ENCODE measurements at regions of chr9 and their contacts with region 1.

Region 1: GRCh38 chr9:90914868-90915483 is 113.4 kb downstream of the SYK start:
- DNase-seq: peak; percentile 52 to 81 (median 71)
- H3K4me3 ChIP-seq: no peak overlapping the region
- H3K27ac ChIP-seq: no peak overlapping the region
- H3K27me3 ChIP-seq: peaks cover 0 to 12% (median 0%) of the 10 kb centered on the region in 45 donors
- CTCF ChIP-seq: peak; percentile 69 to 99 (median 93)

Region 2: DNA sequence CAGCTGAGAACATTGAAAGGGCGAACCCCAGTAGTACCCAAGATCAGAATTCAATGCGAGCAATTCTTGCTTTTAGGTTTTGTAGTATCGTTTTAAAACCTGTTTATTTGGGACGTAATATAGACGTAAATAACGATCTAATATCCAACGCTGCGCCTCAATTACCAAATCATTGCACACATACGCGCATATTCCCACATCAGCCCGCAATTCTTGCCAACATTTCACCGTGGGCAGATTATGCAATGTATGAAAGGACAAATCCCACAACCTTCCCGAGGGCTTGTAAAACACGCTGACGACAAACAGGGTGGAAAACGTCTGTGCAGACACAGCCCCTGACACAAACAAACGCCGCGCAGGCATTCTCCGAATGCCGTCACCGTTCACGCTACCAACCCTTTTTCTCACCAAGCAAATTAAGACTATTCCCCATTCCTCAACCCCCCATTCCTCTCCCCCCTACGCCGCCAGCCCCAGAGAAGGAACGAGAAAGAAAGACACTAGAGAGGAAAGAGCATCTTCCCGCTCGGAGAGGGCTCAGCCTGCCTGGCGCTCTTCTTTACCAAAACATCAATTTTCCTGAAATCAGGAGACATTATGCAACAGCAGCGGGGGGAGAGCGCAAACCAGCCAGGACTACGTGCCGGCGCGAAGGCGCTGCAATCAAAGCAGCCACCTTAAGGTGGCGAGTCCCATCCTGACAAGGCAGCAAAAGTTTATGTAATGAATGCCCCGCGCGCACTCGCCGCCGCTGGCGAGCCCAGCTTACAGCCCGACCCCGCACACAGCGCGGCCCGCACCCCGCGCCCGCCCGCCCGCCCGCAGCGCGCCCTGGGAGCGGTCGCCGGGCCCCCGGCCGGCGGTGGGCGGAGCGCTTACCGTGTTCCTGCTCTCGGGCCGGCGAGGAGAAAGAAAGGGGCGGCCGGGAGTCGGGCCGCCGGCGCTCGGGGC is 508.1 kb after region 1 on chr9:
- intact Hi-C with region 1: loop called in 1 of 2 experiments (anchors 5 kb)
- DNase-seq: peak; percentile 37 to 74 (median 61)
- H3K4me3 ChIP-seq: peak overlapping the region; percentile 47 to 86 (median 73)
- H3K27ac ChIP-seq: peak overlapping the region in 58 of 59 donors; percentile 3 to 97 (median 88)
- H3K27me3 ChIP-seq: no peaks in the 10 kb centered on the region
- CTCF ChIP-seq: peak in 27 of 56 donors; percentile 2 to 45 (median 23)

Region 3: GRCh38 chr9:91433180-91433579 is 518.2 kb after region 1 on chr9:
- intact Hi-C with region 1: loop called (anchors 5 to 10 kb)
- DNase-seq: no peak
- H3K4me3 ChIP-seq: no peak overlapping the region
- H3K27ac ChIP-seq: no peak overlapping the region
- H3K27me3 ChIP-seq: no peaks in the 10 kb centered on the region
- CTCF ChIP-seq: peak in 53 of 56 donors; percentile 12 to 73 (median 52)

Region 4: GRCh38 chr9:91465420-91465819 is 550.4 kb after region 1 on chr9:
- intact Hi-C with region 1: no loop called
- DNase-seq: no peak
- H3K4me3 ChIP-seq: no peak overlapping the region
- H3K27ac ChIP-seq: no peak overlapping the region
- H3K27me3 ChIP-seq: no peaks in the 10 kb centered on the region
- CTCF ChIP-seq: no peak

Region 5: GRCh38 chr9:91681461-91682305 is 766.7 kb after region 1 on chr9:
- intact Hi-C with region 1: loop called (anchors 2 to 10 kb)
- DNase-seq: peak; percentile 63 to 88 (median 76)
- H3K4me3 ChIP-seq: peak overlapping the region in 58 of 59 donors; percentile 13 to 63 (median 44)
- H3K27ac ChIP-seq: no peak overlapping the region
- H3K27me3 ChIP-seq: peaks cover 0 to 4% (median 0%) of the 10 kb centered on the region in 45 donors
- CTCF ChIP-seq: peak; percentile 52 to 98 (median 86)

Region 6: GRCh38 chr9:91734371-91734981 is 819.5 kb after region 1 on chr9:
- intact Hi-C with region 1: loop called in 1 of 2 experiments (anchors 5 kb)
- DNase-seq: peak in 9 of 10 donors; percentile 41 to 81 (median 67)
- H3K4me3 ChIP-seq: no peak overlapping the region
- H3K27ac ChIP-seq: no peak overlapping the region
- H3K27me3 ChIP-seq: peaks cover 0 to 4% (median 0%) of the 10 kb centered on the region in 45 donors
- CTCF ChIP-seq: peak; percentile 65 to 98 (median 89)

Measured in dorsolateral prefrontal cortex (tissue), 120 donors.